ENCODE measurements at regions of chr6 and their contacts with region 1.

Region 1: DNA sequence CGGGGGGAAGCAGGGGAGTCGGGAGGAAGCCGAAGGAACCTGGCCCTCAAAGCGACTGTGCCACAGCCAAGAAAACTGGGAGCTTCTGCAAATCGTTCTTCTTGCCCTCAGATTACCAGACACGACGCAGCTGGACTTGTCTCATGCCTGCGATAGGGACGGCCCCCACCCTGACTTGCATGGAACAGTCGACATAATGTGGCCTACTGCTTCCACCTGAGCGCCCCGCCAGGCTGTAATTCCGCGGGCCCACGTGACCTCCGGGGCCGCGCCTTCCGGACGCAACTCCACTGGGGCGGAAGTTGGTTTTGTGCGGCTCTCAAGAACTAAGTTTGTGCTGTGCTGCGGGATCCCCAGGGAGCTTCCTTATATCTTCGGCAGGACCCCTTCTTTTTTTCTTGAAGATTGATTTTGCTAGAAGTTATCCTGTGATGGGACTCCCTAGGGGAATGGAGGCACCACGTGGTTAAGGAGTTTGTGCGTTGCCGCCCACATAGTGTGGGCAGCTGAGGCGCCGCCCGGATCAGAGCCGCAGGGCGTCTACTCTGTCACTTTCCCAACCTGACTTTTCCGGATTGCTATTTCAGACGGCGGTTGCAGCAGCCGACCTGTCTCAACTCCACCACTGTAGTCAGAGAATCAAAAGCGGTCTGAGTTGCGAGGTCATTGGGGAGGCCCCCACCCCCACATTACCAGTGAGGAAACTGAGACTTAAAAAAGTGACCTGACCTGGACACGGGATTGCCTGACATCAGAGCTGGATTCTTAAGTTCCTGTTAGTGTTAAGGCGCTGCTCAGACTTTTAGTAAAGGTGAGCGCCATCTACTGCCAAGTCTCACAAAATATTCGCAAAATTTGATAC is 540 bp upstream of the CD164 start:
- H3K4me3 ChIP-seq: peak overlapping the region; percentile 78
- H3K27ac ChIP-seq: peak overlapping the region; percentile 98
- H3K4me1 ChIP-seq: peaks cover 8% of the 10 kb centered on the region
- CTCF ChIP-seq: peak; percentile 55

Region 2: DNA sequence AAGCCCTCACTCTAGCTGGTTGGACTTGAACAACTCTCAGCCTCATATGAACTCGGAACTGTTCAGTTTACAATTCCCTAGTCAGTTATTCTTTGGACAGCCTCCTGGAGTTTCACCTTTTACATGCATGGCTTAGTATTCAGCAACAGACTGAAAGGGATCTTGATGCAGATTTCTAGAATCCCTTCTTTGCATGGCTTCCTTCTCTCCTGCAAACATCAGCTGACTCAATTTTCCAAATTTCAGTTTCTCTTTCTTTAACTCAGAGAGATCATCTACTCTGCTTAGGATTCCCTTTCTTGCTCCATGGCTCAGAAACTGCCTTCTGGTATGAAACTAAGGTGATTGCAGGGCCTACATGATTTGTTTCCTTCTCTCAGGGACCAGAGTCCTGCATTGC is 187.9 kb before region 1 on chr6:
- CTCF ChIA-PET with region 1: interaction called, 19 read pairs
- POLR2A ChIA-PET with region 1: no interaction called
- H3K4me3 ChIP-seq: no peak overlapping the region
- H3K27ac ChIP-seq: no peak overlapping the region
- H3K4me1 ChIP-seq: no peaks in the 10 kb centered on the region
- CTCF ChIP-seq: no peak

Region 3: DNA sequence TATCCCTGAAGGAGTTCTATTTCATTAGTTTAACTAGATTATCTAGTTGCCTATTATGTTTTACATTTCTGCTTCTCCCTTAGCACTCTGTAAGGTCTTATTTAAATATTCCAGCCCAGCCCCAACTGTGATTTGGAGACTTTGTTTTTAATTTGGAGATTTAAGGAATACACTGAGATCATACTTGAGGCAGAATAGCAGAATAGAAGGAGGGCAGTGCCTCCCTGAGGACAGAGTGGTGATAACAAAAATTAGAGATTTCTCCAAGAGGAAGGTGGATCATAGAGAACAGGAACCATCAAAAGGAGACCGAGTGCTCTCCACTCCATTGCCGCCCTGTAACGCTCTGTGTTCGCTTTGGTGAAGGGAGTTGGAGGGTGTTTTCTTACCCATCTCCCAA is 14.2 kb after region 1 on chr6:
- CTCF ChIA-PET with region 1: interaction called, 37 read pairs
- POLR2A ChIA-PET with region 1: interaction called, 11 read pairs
- H3K4me3 ChIP-seq: no peak overlapping the region
- H3K27ac ChIP-seq: no peak overlapping the region
- H3K4me1 ChIP-seq: no peaks in the 10 kb centered on the region
- CTCF ChIP-seq: no peak

Region 4: DNA sequence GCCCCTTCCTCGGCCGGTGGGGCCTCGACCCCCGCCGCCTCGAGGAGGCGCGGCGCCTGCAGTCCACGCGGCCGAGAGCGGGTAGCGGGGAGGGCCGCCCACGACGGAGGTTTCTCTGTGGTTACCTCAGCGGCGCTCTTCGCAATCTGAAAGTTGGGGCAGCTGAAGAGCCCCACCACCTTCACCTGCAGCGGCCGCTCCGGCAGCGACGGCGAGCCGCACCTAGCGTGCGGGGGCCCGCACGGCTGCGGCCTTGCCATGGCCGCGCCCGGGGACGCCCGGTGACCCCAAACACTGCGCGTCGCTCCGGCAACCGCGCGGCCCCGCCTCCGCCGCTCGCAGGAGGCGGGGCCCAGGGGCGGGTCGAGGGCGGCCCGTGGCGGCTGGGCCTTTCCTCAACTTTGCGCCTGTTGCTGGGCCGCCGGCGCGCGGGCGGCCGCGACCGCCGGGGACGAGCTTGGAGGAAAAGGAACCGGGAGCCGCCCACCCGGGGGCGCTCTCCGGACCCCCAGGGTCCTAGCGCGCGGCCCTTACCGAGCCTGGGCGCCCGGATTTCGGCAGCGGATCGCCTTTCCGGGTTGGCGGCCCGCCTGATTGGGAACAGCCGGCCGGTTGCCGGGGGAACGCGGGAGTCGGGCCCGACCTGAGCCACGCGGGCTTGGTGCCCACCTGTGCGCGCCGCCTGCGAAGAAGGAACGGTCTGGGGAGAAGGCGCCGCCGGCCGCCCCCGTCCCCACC is 57.7 kb after region 1 on chr6 and contains the starts of genes PPIL6 and SMPD2:
- CTCF ChIA-PET with region 1: interaction called, 24 read pairs
- POLR2A ChIA-PET with region 1: interaction called, 13 read pairs
- H3K4me3 ChIP-seq: peak within 1 kb of the TSS; percentile 82
- H3K27ac ChIP-seq: peak within 1 kb of the TSS; percentile 68; the same call in 1 of the 2 replicates
- H3K4me1 ChIP-seq: no peaks in the 10 kb centered on the region
- CTCF ChIP-seq: peak; percentile 59; the same call in 1 of the 2 replicates

Region 5: GRCh38 chr6:109644131-109644530 is 261.3 kb after region 1 on chr6:
- CTCF ChIA-PET with region 1: no interaction called
- POLR2A ChIA-PET with region 1: no interaction called
- H3K4me3 ChIP-seq: no peak overlapping the region
- H3K27ac ChIP-seq: no peak overlapping the region
- H3K4me1 ChIP-seq: no peaks in the 10 kb centered on the region
- CTCF ChIP-seq: no peak

Measured in HEK293 (cell line).